ENCODE measurements at regions of chrX and their contacts with region 1.

Region 1: GRCh38 chrX:149570672-149571071 is 16.6 kb downstream of the MAGEA9B start:
- DNase-seq: peak in 1 of 4 experiments; percentile 2
- ATAC-seq: no peak
- H3K4me3 ChIP-seq: no peak overlapping the region
- H3K27ac ChIP-seq: no peak overlapping the region
- H3K4me1 ChIP-seq: peaks cover 0 to 3% of the 10 kb centered on the region in 2 experiments; a peak in 2 of 5 replicates
- H3K27me3 ChIP-seq: 0 out of 5 replicates have a peak, but pooled peaks cover 0 to 4% of the 10 kb centered on the region in 2 experiments
- CTCF ChIP-seq: no peak
- EP300 ChIP-seq: no peak
- POLR2A ChIP-seq: no peak
- RAD21 ChIP-seq: no peak

Region 2: DNA sequence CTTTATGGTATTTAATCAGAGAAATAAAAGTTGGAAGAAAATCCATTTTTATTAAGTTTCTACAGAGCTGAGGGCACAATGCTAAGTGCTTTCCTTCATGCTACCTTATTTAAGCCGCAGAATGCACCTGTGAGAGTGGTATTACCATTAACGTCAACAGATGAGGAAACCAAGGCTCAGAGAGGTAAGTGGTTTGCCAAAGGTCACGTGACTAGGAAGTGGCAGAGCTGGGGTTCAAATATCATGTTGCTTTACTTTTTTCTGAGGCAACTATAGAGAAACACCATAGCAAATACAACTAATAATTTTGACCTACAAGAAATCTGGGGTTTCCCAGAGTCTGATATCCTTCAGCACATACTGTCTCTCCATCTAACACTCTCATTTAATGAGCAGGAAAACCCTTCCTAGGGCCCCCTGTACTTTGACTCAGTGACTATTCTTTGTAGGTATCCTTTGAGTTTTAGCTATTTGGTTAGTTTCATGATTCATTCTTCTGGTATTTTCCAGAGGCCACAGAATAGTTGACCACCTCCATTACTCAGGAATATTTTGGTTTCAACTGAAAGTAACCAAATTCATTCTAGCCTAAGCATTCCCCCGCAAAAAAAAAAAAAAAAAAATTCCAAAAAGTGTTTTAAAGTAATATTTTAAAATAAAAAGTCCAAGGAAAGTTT is 205.8 kb before region 1 on chrX:
- CTCF ChIA-PET with region 1: no interaction called
- POLR2A ChIA-PET with region 1: no interaction called
- in situ Hi-C with region 1: no loop called
- intact Hi-C with region 1: no loop called
- DNase-seq: no peak
- ATAC-seq: no peak
- H3K4me3 ChIP-seq: no peak overlapping the region
- H3K27ac ChIP-seq: no peak overlapping the region
- H3K4me1 ChIP-seq: no peaks in the 10 kb centered on the region
- H3K27me3 ChIP-seq: no peaks in the 10 kb centered on the region
- CTCF ChIP-seq: no peak
- EP300 ChIP-seq: no peak
- POLR2A ChIP-seq: no peak
- RAD21 ChIP-seq: no peak

Region 3: GRCh38 chrX:149527705-149528104 is 43.0 kb before region 1 on chrX:
- CTCF ChIA-PET with region 1: no interaction called
- POLR2A ChIA-PET with region 1: no interaction called
- in situ Hi-C with region 1: no loop called
- intact Hi-C with region 1: no loop called
- DNase-seq: peak; percentile 24 to 60 (median 28)
- ATAC-seq: peak; percentile 68
- H3K4me3 ChIP-seq: no peak overlapping the region
- H3K27ac ChIP-seq: no peak overlapping the region
- H3K4me1 ChIP-seq: peaks cover 0 to 12% of the 10 kb centered on the region in 2 experiments; a peak in 3 of 5 replicates
- H3K27me3 ChIP-seq: no peaks in the 10 kb centered on the region
- CTCF ChIP-seq: peak; percentile 56 to 63 (median 63)
- EP300 ChIP-seq: no peak
- POLR2A ChIP-seq: no peak
- RAD21 ChIP-seq: peak; percentile 37 to 61

Region 4: DNA sequence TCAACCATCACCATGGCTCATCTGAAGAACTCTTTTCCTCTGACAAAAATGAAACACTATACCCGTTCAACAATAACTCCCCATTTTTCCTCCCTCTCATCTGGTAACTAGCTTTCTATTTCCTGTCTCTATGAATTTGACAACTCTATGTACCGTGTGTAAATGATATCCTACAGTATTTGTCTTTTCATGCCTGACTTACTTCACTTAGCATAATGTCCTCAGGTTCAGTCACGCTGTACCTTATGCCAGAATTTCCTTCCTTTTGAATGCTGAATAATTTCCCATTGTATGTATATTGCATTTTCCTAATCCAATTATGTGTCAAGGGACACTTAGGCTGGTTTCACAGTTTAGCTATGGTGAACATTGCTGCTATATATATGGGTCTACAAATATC is 229.3 kb after region 1 on chrX:
- CTCF ChIA-PET with region 1: no interaction called
- POLR2A ChIA-PET with region 1: no interaction called
- in situ Hi-C with region 1: loop called (anchors 25 kb)
- intact Hi-C with region 1: no loop called
- DNase-seq: no peak
- ATAC-seq: no peak
- H3K4me3 ChIP-seq: no peak overlapping the region
- H3K27ac ChIP-seq: no peak overlapping the region
- H3K4me1 ChIP-seq: peaks cover 0 to 4% of the 10 kb centered on the region in 2 experiments; a peak in 4 of 5 replicates
- H3K27me3 ChIP-seq: peaks cover 0 to 18% of the 10 kb centered on the region in 2 experiments; a peak in 3 of 5 replicates
- CTCF ChIP-seq: no peak
- EP300 ChIP-seq: no peak
- POLR2A ChIP-seq: no peak
- RAD21 ChIP-seq: no peak